ENCODE measurements at regions of chr16 and their contacts with region 1.

Region 1: DNA sequence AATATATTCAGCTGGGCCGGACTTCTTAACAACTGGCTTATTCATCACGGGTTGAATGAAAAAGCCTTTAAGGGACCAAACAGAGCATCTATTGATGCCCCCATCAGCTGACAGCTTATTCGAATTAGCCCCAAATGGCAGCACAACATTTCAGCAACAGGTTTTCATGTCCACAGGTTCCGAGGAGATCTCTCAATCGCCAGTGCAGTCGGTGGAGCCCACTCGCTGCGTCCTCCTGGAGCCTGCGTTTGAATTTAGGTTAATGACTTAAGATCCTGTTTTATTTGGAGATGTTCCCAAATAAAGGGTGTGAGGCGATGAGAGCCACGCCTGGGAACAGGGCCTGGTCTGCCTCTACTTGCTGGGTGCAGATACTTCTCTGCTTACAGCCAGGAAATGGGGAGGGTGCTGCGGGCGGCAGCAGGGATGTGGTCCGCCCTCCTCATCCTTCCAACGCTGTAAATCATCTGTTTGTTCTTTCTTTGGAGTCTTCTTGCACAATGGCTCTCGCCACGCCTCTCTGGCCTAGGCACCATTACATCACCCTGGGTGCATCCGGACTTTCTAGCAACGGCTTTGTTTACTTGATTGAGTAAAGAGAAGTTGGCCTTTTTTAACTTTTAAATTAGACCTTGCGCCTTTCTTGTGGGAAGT is 22.6 kb downstream of the NDE1 start:
- DNase-seq: peak; percentile 89
- H3K4me3 Mint-ChIP-seq: peak overlapping the region; percentile 66
- H3K27ac Mint-ChIP-seq: peak overlapping the region; percentile 99
- H3K4me1 Mint-ChIP-seq: peaks cover 59% of the 10 kb centered on the region
- H3K27me3 Mint-ChIP-seq: no peaks in the 10 kb centered on the region

Region 2: GRCh38 chr16:15650019-15650697 is 22.5 kb before region 1 on chr16 and contains the start of gene NDE1:
- CTCF ChIA-PET with region 1: interaction called, 7 read pairs
- POLR2A ChIA-PET with region 1: interaction called, 23 read pairs
- DNase-seq: peak; percentile 91
- H3K4me3 Mint-ChIP-seq: peak within 1 kb of the TSS; percentile 98
- H3K27ac Mint-ChIP-seq: peak within 1 kb of the TSS; percentile 91
- H3K4me1 Mint-ChIP-seq: peaks cover 31% of the 10 kb centered on the region
- H3K27me3 Mint-ChIP-seq: no peaks in the 10 kb centered on the region
- total RNA-seq, gene NDE1: 115 to 133 TPM

Region 3: GRCh38 chr16:15658149-15658548 is 14.5 kb before region 1 on chr16:
- CTCF ChIA-PET with region 1: interaction called, 11 read pairs
- POLR2A ChIA-PET with region 1: interaction called, 19 read pairs
- DNase-seq: no peak
- H3K4me3 Mint-ChIP-seq: no peak overlapping the region
- H3K27ac Mint-ChIP-seq: peak overlapping the region; percentile 52
- H3K4me1 Mint-ChIP-seq: peaks cover 57% of the 10 kb centered on the region
- H3K27me3 Mint-ChIP-seq: no peaks in the 10 kb centered on the region

Measured in activated CD4-positive, alpha-beta memory T cell treated with anti-CD3 and anti-CD28 coated beads, Interleukin-2, amount 10 ng/mL, durations not matched to agents 7 days and 5 days (primary cell).